IMR-90 (cell line): ENCODE measurements at regions of chr7 and their contacts with region 1.

Region 1: GRCh38 chr7:77247206-77247850 is 47.7 kb upstream of the FGL2 start:
- DNase-seq: peak; percentile 83
- ATAC-seq: peak; percentile 41
- H3K4me3 ChIP-seq: no peak overlapping the region
- H3K27ac ChIP-seq: no peak overlapping the region
- H3K4me1 ChIP-seq: peaks cover 21% of the 10 kb centered on the region
- H3K27me3 ChIP-seq: no peaks in the 10 kb centered on the region
- CTCF ChIP-seq: peak; percentile 84
- POLR2A ChIP-seq: no peak
- RAD21 ChIP-seq: peak; percentile 83

Region 2: GRCh38 chr7:76997381-76997780 is 249.9 kb before region 1 on chr7:
- CTCF ChIA-PET with region 1: no interaction called
- POLR2A ChIA-PET with region 1: no interaction called
- dilution Hi-C with region 1: no loop called
- in situ Hi-C with region 1: no loop called
- intact Hi-C with region 1: no loop called
- DNase-seq: no peak
- ATAC-seq: no peak
- H3K4me3 ChIP-seq: no peak overlapping the region
- H3K27ac ChIP-seq: no peak overlapping the region
- H3K4me1 ChIP-seq: no peaks in the 10 kb centered on the region
- H3K27me3 ChIP-seq: no peaks in the 10 kb centered on the region
- CTCF ChIP-seq: no peak
- POLR2A ChIP-seq: no peak
- RAD21 ChIP-seq: no peak

Region 3: GRCh38 chr7:77326696-77327628 is 79.6 kb after region 1 on chr7:
- CTCF ChIA-PET with region 1: interaction called, 19 read pairs
- POLR2A ChIA-PET with region 1: interaction called, 10 read pairs
- dilution Hi-C with region 1: no loop called
- in situ Hi-C with region 1: loop called (anchors 5 kb)
- intact Hi-C with region 1: loop called (anchors 1 kb)
- DNase-seq: peak; percentile 91
- ATAC-seq: peak; percentile 74
- H3K4me3 ChIP-seq: no peak overlapping the region
- H3K27ac ChIP-seq: peak overlapping the region; percentile 78
- H3K4me1 ChIP-seq: peaks cover 27% of the 10 kb centered on the region
- H3K27me3 ChIP-seq: no peaks in the 10 kb centered on the region
- CTCF ChIP-seq: no peak
- POLR2A ChIP-seq: no peak
- RAD21 ChIP-seq: peak; percentile 24; the same call in 1 of the 2 replicates

Region 4: GRCh38 chr7:77331938-77332695 is 84.8 kb after region 1 on chr7:
- CTCF ChIA-PET with region 1: interaction called, 19 read pairs
- POLR2A ChIA-PET with region 1: interaction called, 10 read pairs
- dilution Hi-C with region 1: no loop called
- in situ Hi-C with region 1: loop called (anchors 5 kb)
- intact Hi-C with region 1: loop called (anchors 1 kb)
- DNase-seq: peak; percentile 92
- ATAC-seq: peak; percentile 75
- H3K4me3 ChIP-seq: no peak overlapping the region
- H3K27ac ChIP-seq: no peak overlapping the region
- H3K4me1 ChIP-seq: peaks cover 18% of the 10 kb centered on the region
- H3K27me3 ChIP-seq: no peaks in the 10 kb centered on the region
- CTCF ChIP-seq: peak; percentile 85
- POLR2A ChIP-seq: no peak
- RAD21 ChIP-seq: peak; percentile 89

Region 5: GRCh38 chr7:77467408-77467807 is 220.1 kb after region 1 on chr7:
- CTCF ChIA-PET with region 1: no interaction called
- POLR2A ChIA-PET with region 1: no interaction called
- dilution Hi-C with region 1: no loop called
- in situ Hi-C with region 1: no loop called
- intact Hi-C with region 1: no loop called
- DNase-seq: no peak
- ATAC-seq: no peak
- H3K4me3 ChIP-seq: no peak overlapping the region
- H3K27ac ChIP-seq: no peak overlapping the region
- H3K4me1 ChIP-seq: no peaks in the 10 kb centered on the region
- H3K27me3 ChIP-seq: no peaks in the 10 kb centered on the region
- CTCF ChIP-seq: no peak
- POLR2A ChIP-seq: no peak
- RAD21 ChIP-seq: no peak